ENCODE measurements at regions of chr7 and their contacts with region 1.

Region 1: GRCh38 chr7:27921081-27921836 is 181.3 kb downstream of the TAX1BP1 start:
- DNase-seq: peak in 2 of 5 donors; percentile 15 to 25
- H3K4me3 ChIP-seq: no peak overlapping the region
- H3K27ac ChIP-seq: no peak overlapping the region
- H3K4me1 ChIP-seq: no peaks in the 10 kb centered on the region
- H3K27me3 ChIP-seq: no peaks in the 10 kb centered on the region
- CTCF ChIP-seq: peak in 1 of 3 donors; percentile 55
- EP300 ChIP-seq: no peak
- POLR2A ChIP-seq: no peak

Region 2: GRCh38 chr7:27593226-27593625 is 328.0 kb before region 1 on chr7:
- intact Hi-C with region 1: loop called in 1 of 4 experiments (anchors 10 kb)
- DNase-seq: no peak
- H3K4me3 ChIP-seq: no peak overlapping the region
- H3K27ac ChIP-seq: no peak overlapping the region
- H3K4me1 ChIP-seq: no peaks in the 10 kb centered on the region
- H3K27me3 ChIP-seq: no peaks in the 10 kb centered on the region
- CTCF ChIP-seq: no peak
- EP300 ChIP-seq: no peak
- POLR2A ChIP-seq: no peak

Region 3: DNA sequence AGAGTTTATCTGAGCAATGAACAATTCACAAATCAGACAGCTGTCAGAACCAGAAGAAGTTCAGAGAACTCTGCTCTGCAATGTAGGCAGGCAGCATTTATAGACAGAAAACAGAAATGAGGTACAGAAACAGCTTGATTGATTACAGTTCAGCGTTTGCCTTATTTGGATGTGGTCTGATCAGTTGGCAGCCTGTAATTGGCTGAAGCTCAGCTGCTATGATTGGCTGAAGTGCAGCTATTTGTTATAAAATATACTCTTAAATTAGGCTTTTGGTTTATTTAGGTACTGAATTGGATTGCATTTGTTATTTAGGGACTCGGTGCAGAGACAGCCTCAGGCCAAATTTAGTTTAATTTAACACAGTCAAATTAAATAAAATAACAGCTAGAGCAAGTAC is 345.1 kb after region 1 on chr7:
- intact Hi-C with region 1: no loop called
- DNase-seq: no peak
- H3K4me3 ChIP-seq: no peak overlapping the region
- H3K27ac ChIP-seq: no peak overlapping the region
- H3K4me1 ChIP-seq: no peaks in the 10 kb centered on the region
- H3K27me3 ChIP-seq: no peaks in the 10 kb centered on the region
- CTCF ChIP-seq: no peak
- EP300 ChIP-seq: no peak
- POLR2A ChIP-seq: no peak